ENCODE measurements at regions of chr7 and their contacts with region 1.

Region 1: GRCh38 chr7:142323706-142324105 is 65.8 kb upstream of the PRSS58 start:
- DNase-seq: peak; percentile 66
- ATAC-seq: peak; percentile 61
- H3K4me3 Mint-ChIP-seq: peak overlapping the region; percentile 40
- H3K27ac Mint-ChIP-seq: peak overlapping the region; percentile 40
- H3K4me1 Mint-ChIP-seq: peaks cover 20% of the 10 kb centered on the region
- H3K27me3 Mint-ChIP-seq: no peaks in the 10 kb centered on the region
- CTCF ChIP-seq: peak; percentile 75

Region 2: GRCh38 chr7:141975806-141976523 is 347.7 kb before region 1 on chr7:
- CTCF ChIA-PET with region 1: interaction called, 12 read pairs
- POLR2A ChIA-PET with region 1: no interaction called
- intact Hi-C with region 1: no loop called
- DNase-seq: peak; percentile 80
- ATAC-seq: peak; percentile 88
- H3K4me3 Mint-ChIP-seq: peak overlapping the region; percentile 68
- H3K27ac Mint-ChIP-seq: peak overlapping the region; percentile 62
- H3K4me1 Mint-ChIP-seq: peaks cover 12% of the 10 kb centered on the region
- H3K27me3 Mint-ChIP-seq: no peaks in the 10 kb centered on the region
- CTCF ChIP-seq: peak; percentile 96

Region 3: DNA sequence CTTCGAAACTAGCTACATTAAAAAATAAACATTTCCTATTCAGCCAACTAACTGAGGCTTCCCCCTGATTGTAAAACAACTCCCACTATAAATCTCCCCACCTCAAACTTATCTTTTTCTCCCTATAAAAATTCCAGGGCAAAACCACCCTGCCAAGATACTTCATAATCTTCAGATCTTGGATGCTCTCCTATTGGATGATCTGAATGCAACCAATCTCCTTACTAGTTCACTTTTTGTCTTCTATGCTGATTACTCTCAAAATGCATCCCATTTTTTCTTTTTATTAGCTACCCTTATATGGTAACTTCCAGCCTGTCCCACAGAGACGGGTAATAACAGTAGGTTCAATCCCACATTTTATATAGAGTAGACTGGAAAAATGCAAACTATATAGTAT is 50.9 kb before region 1 on chr7:
- CTCF ChIA-PET with region 1: no interaction called
- POLR2A ChIA-PET with region 1: no interaction called
- intact Hi-C with region 1: no loop called
- DNase-seq: no peak
- ATAC-seq: no peak
- H3K4me3 Mint-ChIP-seq: no peak overlapping the region
- H3K27ac Mint-ChIP-seq: no peak overlapping the region
- H3K4me1 Mint-ChIP-seq: no peaks in the 10 kb centered on the region
- H3K27me3 Mint-ChIP-seq: peaks cover 10% of the 10 kb centered on the region
- CTCF ChIP-seq: no peak

Region 4: GRCh38 chr7:142301923-142302550 is 21.7 kb before region 1 on chr7:
- CTCF ChIA-PET with region 1: interaction called, 62 read pairs
- POLR2A ChIA-PET with region 1: interaction called, 3 read pairs
- intact Hi-C with region 1: no loop called
- DNase-seq: no peak
- ATAC-seq: peak; percentile 29
- H3K4me3 Mint-ChIP-seq: no peak overlapping the region
- H3K27ac Mint-ChIP-seq: no peak overlapping the region
- H3K4me1 Mint-ChIP-seq: peaks cover 16% of the 10 kb centered on the region
- H3K27me3 Mint-ChIP-seq: peaks cover 12% of the 10 kb centered on the region
- CTCF ChIP-seq: peak; percentile 72

Region 5: DNA sequence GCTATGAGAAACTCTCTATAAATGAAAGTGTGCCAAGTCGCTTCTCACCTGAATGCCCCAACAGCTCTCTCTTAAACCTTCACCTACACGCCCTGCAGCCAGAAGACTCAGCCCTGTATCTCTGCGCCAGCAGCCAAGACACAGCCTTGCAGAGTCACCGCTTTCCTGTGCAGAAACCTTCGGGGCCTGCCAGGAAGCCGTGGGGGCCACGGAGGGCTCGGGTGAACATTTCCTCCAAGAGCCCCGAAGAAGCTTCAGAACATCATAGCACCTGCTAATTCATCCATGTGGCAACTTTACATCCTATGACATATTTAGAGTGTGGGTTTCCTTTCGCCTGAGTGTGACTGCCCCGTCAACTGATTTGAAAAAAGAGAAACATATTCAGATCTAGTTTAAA is 10.2 kb before region 1 on chr7:
- CTCF ChIA-PET with region 1: interaction called, 19 read pairs
- POLR2A ChIA-PET with region 1: no interaction called
- intact Hi-C with region 1: no loop called
- DNase-seq: peak; percentile 53
- ATAC-seq: peak; percentile 77
- H3K4me3 Mint-ChIP-seq: peak overlapping the region; percentile 49
- H3K27ac Mint-ChIP-seq: no peak overlapping the region
- H3K4me1 Mint-ChIP-seq: peaks cover 16% of the 10 kb centered on the region
- H3K27me3 Mint-ChIP-seq: peaks cover 4% of the 10 kb centered on the region
- CTCF ChIP-seq: no peak

Region 6: DNA sequence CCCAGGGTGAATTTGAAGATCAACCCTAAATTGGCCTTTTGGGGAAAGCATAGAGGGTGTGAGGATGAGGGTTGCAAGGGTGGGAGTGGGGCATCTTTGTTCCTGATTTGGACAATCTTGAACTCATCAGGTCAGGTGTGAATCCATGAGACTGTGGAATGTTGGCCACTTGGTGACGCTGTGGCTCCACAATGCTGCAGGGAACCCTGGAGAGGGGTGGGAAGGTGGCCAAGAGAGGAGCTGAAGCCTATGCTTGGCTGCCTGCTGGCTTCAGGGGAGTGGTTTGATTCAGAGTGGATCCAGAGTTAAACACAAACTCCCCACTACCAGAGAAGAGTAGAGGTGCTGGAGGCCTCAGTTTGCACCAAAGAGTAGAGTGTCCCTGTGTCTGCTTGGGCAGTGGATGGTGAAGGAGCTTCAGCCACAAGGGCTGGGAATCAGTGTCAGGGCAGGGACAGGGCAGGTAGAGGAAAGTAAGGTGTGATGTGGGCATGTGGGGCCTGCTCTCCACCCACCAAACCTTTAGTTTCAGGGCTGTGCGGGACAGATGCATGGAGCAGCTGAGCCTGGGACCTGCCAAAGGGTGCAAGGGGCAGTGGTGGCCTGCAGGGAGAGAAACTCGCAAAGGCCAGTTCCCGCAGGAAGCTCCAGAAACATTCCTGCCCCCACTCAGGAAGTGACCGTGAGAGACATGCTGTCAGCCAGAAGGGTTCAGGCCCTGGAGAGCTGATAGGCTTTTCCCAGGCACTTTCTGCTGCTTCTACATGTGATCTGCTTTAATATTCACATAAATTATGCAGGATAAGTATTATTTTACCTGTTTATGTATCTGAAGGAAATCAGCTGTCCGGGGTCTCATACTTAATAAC is 15.2 kb after region 1 on chr7:
- CTCF ChIA-PET with region 1: interaction called, 12 read pairs
- POLR2A ChIA-PET with region 1: interaction called, 3 read pairs
- intact Hi-C with region 1: no loop called
- DNase-seq: peak; percentile 53
- ATAC-seq: peak; percentile 47
- H3K4me3 Mint-ChIP-seq: no peak overlapping the region
- H3K27ac Mint-ChIP-seq: peak overlapping the region; percentile 26
- H3K4me1 Mint-ChIP-seq: peaks cover 23% of the 10 kb centered on the region
- H3K27me3 Mint-ChIP-seq: peaks cover 2% of the 10 kb centered on the region
- CTCF ChIP-seq: no peak

Region 7: DNA sequence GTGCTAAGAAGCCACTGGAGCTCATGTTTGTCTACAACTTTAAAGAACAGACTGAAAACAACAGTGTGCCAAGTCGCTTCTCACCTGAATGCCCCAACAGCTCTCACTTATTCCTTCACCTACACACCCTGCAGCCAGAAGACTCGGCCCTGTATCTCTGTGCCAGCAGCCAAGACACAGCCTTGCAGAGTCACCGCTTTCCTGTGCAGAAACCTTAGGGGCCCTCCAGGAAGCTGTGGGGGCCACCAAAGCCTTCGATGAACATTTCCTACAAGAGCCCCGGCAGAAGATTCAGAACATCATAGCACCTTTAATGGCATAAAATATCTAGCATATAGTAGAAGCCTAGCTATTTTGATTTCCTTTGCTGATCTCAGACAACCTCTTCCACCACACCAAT is 22.1 kb after region 1 on chr7:
- CTCF ChIA-PET with region 1: interaction called, 19 read pairs
- POLR2A ChIA-PET with region 1: no interaction called
- intact Hi-C with region 1: no loop called
- DNase-seq: peak; percentile 68
- ATAC-seq: peak; percentile 81
- H3K4me3 Mint-ChIP-seq: peak overlapping the region; percentile 51
- H3K27ac Mint-ChIP-seq: peak overlapping the region; percentile 76
- H3K4me1 Mint-ChIP-seq: peaks cover 24% of the 10 kb centered on the region
- H3K27me3 Mint-ChIP-seq: no peaks in the 10 kb centered on the region
- CTCF ChIP-seq: no peak

Region 8: GRCh38 chr7:142357953-142358520 is 34.3 kb after region 1 on chr7:
- CTCF ChIA-PET with region 1: interaction called, 11 read pairs
- POLR2A ChIA-PET with region 1: no interaction called
- intact Hi-C with region 1: no loop called
- DNase-seq: peak; percentile 51
- ATAC-seq: peak; percentile 81
- H3K4me3 Mint-ChIP-seq: no peak overlapping the region
- H3K27ac Mint-ChIP-seq: no peak overlapping the region
- H3K4me1 Mint-ChIP-seq: peaks cover 24% of the 10 kb centered on the region
- H3K27me3 Mint-ChIP-seq: peaks cover 4% of the 10 kb centered on the region
- CTCF ChIP-seq: peak; percentile 78

Measured in activated CD8-positive, alpha-beta T cell treated with anti-CD3 and anti-CD28 coated beads for 36 hours (primary cell).